Activated CD4-positive, alpha-beta T cell treated with anti-CD3 and anti-CD28 coated beads, Interleukin-2, amount 10 ng/mL, durations not matched to agents 7 days and 5 days (primary cell): ENCODE measurements at regions of chr2 and their contacts with region 1.

Region 1: DNA sequence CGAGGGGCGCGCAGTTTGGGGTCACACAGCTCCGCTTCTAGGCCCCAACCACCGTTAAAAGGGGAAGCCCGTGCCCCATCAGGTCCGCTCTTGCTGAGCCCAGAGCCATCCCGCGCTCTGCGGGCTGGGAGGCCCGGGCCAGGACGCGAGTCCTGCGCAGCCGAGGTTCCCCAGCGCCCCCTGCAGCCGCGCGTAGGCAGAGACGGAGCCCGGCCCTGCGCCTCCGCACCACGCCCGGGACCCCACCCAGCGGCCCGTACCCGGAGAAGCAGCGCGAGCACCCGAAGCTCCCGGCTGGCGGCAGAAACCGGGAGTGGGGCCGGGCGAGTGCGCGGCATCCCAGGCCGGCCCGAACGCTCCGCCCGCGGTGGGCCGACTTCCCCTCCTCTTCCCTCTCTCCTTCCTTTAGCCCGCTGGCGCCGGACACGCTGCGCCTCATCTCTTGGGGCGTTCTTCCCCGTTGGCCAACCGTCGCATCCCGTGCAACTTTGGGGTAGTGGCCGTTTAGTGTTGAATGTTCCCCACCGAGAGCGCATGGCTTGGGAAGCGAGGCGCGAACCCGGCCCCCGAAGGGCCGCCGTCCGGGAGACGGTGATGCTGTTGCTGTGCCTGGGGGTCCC is at the start of gene ITGA4:
- DNase-seq: peak; percentile 87
- H3K4me3 Mint-ChIP-seq: peak within 1 kb of the TSS; percentile 95
- H3K27ac Mint-ChIP-seq: peak within 1 kb of the TSS; percentile 97
- H3K4me1 Mint-ChIP-seq: peaks cover 46% of the 10 kb centered on the region
- H3K27me3 Mint-ChIP-seq: no peaks in the 10 kb centered on the region
- total RNA-seq, gene ITGA4: 160 to 163 TPM

Region 2: DNA sequence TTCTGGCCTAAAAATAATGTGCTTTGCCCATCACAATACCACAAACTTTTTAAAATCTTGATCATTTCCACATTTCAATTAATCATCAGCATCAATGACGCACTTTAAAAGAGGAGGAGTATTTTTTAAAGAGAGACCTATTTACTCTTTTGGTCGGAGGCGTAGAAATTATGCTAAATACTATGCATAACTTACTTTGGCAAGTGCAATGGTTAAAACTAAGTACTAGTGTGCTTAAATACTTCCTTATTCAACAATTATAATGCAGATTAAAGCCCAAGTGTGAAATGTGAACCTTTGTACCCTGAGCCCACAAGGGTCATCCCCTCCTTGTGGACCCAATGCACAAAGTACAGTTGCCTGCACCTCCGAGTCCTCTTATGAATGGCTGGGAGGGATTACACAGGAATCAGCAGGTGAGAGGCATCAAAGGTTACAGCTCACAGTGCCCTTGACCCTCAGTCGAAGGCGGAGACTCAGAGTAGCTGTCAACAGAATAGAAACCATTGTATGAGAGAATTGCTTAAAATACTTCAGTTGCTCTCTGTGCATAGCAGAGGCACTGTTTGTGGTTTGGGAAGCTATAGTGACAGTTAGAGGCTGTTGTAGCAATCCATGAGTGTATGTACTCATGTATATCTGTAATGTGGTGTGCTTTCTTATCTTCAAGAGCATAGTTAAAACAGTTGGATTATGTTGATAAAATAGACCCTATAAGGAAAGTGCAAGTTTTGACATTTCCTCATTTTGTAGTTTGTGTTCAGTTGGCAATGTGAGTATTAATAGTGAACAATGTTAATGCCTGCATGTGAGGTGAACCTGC is 151.7 kb before region 1 on chr2:
- CTCF ChIA-PET with region 1: interaction called, 16 read pairs
- POLR2A ChIA-PET with region 1: interaction called, 16 read pairs
- DNase-seq: peak; percentile 79
- H3K4me3 Mint-ChIP-seq: peak overlapping the region; percentile 65
- H3K27ac Mint-ChIP-seq: peak overlapping the region; percentile 99
- H3K4me1 Mint-ChIP-seq: peaks cover 80% of the 10 kb centered on the region
- H3K27me3 Mint-ChIP-seq: no peaks in the 10 kb centered on the region

Region 3: DNA sequence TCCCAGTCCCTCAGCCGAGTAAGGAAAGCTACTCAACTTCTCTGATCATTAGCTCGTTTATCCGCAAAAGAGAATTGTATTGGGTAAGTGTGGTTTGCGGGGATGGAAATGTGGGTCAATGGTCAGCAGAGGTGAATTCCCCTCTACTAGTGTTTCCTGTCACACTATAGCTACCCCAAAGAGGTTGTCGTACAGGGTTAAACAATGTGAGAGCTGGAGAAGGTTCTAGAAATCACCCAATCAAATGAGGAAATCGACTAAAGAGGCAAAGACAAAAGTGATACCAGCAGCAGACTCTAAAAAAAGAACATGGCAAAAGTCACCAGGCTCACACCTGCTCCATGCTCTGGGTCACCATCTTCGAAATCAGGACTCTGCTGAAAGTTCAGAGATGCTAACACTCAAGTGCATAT is 144.7 kb before region 1 on chr2:
- CTCF ChIA-PET with region 1: interaction called, 16 read pairs
- POLR2A ChIA-PET with region 1: interaction called, 7 read pairs
- DNase-seq: peak; percentile 35
- H3K4me3 Mint-ChIP-seq: peak overlapping the region; percentile 57
- H3K27ac Mint-ChIP-seq: peak overlapping the region; percentile 93
- H3K4me1 Mint-ChIP-seq: peaks cover 60% of the 10 kb centered on the region
- H3K27me3 Mint-ChIP-seq: no peaks in the 10 kb centered on the region

Region 4: GRCh38 chr2:181441670-181442069 is 15.6 kb before region 1 on chr2:
- CTCF ChIA-PET with region 1: interaction called, 11 read pairs
- POLR2A ChIA-PET with region 1: interaction called, 5 read pairs
- DNase-seq: no peak
- H3K4me3 Mint-ChIP-seq: no peak overlapping the region
- H3K27ac Mint-ChIP-seq: no peak overlapping the region
- H3K4me1 Mint-ChIP-seq: peaks cover 41% of the 10 kb centered on the region
- H3K27me3 Mint-ChIP-seq: peaks cover 5% of the 10 kb centered on the region